ENCODE measurements at regions of chr4 and their contacts with region 1.

Region 1: DNA sequence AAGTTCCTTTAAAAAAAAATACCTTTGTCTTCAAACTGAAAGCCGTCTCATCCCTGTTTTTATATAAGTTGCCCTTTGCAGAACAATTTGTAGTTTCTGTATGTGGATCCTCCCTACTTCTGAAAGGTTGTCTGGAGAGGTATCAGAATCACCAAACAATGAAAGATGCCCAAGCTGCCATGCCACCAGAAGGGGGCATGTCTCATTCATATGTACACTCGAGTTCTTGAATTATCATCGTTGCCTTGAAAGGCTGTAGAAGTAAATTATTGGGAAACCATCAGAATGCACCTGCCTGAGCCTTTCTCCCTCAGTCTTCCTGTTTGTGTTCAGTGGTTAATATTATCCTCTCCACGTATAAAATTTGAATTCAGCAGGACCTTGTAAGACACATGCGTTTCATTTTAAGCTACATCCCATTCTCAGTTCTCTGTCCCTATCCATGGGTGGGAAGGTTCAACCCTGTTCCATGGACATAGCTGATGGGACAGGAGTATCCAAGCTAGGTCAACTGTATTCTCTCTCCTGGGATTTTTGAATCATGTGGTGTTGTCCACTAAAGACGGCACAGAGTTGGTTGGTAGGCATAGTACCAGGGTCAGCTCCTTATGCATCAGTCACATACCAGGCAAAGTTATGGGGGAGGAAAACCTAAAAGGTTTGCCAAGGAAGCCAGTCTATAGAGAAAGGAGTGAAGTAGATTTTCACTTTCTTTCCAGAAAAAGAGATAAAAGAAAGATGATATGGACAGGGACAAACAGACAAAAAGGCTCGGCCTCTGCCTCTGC is 24.0 kb downstream of the GALNT7 start:
- DNase-seq: no peak
- ATAC-seq: peak; percentile 56
- H3K4me3 ChIP-seq: peak overlapping the region in 1 of 2 experiments; percentile 25; a peak in 2 of 4 replicates
- H3K27ac ChIP-seq: peak overlapping the region; percentile 99
- H3K4me1 ChIP-seq: peaks cover 93% of the 10 kb centered on the region
- H3K27me3 ChIP-seq: no peaks in the 10 kb centered on the region
- CTCF ChIP-seq: peak; percentile 69

Region 2: GRCh38 chr4:172480471-172480870 is 712.1 kb before region 1 on chr4:
- CTCF ChIA-PET with region 1: no interaction called
- POLR2A ChIA-PET with region 1: no interaction called
- in situ Hi-C with region 1: no loop called
- intact Hi-C with region 1: no loop called
- DNase-seq: no peak
- ATAC-seq: no peak
- H3K4me3 ChIP-seq: no peak overlapping the region
- H3K27ac ChIP-seq: no peak overlapping the region
- H3K4me1 ChIP-seq: no peaks in the 10 kb centered on the region
- H3K27me3 ChIP-seq: no peaks in the 10 kb centered on the region
- CTCF ChIP-seq: no peak

Region 3: DNA sequence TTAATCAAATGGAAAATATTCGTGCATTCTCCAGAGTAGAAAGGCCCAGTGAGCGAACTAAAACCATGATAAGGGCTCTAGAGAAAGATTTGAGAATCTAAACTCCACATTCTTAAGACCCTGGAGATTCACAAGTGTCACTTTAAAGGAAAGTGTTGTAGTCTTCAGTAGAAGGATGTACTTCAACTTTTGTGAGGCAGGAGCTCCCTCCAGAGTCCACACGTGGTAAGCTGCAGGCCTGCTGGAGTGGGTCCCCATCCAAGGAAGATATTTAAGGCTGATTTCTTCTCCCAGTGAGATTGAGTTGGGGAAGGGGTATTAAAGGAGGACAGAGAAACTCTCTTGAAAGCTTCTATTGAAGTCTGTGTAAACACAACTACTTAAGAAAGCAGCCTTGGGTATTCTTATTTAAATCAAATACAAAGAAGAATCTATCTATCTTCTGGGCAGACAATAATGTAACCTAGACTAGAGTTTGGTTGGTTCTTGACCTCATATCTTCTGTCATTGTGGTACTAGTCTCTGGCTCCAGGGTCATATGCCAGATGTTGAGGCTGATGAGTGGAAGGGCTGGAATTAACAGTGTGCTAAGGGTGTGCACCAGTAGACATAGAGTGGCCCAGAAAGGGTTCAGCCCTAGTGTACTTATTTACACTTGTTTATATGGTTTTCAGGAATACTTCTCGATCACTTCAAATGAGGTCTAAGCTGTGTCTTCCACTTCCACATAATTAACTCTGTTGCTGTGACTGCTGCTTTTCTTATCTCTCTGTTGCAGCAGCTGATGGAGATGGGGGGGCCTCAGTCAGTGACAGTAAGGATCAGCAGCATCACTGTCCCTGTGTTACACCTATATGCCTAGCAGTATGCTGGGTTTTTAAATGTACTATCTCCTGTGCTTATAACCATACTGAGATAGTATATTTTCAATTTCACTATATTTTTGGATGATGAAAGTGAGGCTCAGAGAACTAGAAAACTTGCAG is 65.5 kb after region 1 on chr4:
- CTCF ChIA-PET with region 1: no interaction called
- POLR2A ChIA-PET with region 1: no interaction called
- in situ Hi-C with region 1: no loop called
- intact Hi-C with region 1: loop called (anchors 5 kb)
- DNase-seq: peak; percentile 60
- ATAC-seq: peak; percentile 93
- H3K4me3 ChIP-seq: no peak overlapping the region
- H3K27ac ChIP-seq: peak overlapping the region; percentile 98
- H3K4me1 ChIP-seq: peaks cover 47% of the 10 kb centered on the region
- H3K27me3 ChIP-seq: no peaks in the 10 kb centered on the region
- CTCF ChIP-seq: peak; percentile 80

Region 4: GRCh38 chr4:173332021-173332487 is 139.5 kb after region 1 on chr4:
- CTCF ChIA-PET with region 1: no interaction called
- POLR2A ChIA-PET with region 1: no interaction called
- in situ Hi-C with region 1: no loop called
- intact Hi-C with region 1: no loop called
- DNase-seq: no peak
- ATAC-seq: no peak
- H3K4me3 ChIP-seq: peak overlapping the region; percentile 86 to 91
- H3K27ac ChIP-seq: peak overlapping the region; percentile 91
- H3K4me1 ChIP-seq: peaks cover 11% of the 10 kb centered on the region; the same call in 1 of the 2 replicates
- H3K27me3 ChIP-seq: no peaks in the 10 kb centered on the region
- CTCF ChIP-seq: no peak